Right ventricle myocardium inferior (tissue), 1 donor: ENCODE measurements at regions of chr2 and their contacts with region 1.

Region 1: GRCh38 chr2:85243101-85244072 is 84.4 kb downstream of the TGOLN2 start:
- DNase-seq: no peak
- ATAC-seq: peak; percentile 45

Region 2: GRCh38 chr2:85181134-85181631 is 62.2 kb before region 1 on chr2:
- intact Hi-C with region 1: loop called (anchors 10 kb)
- DNase-seq: no peak
- ATAC-seq: peak; percentile 18

Region 3: GRCh38 chr2:85277416-85278158 is 34.2 kb after region 1 on chr2:
- intact Hi-C with region 1: loop called (anchors 5 kb)
- DNase-seq: peak; percentile 74
- ATAC-seq: peak; percentile 91

Region 4: GRCh38 chr2:85340034-85340892 is 96.9 kb after region 1 on chr2:
- intact Hi-C with region 1: no loop called
- DNase-seq: no peak
- ATAC-seq: no peak